ENCODE measurements at regions of chr2 and their contacts with region 1.

Region 1: GRCh38 chr2:237512774-237513466 is 25.9 kb downstream of the MLPH start:
- DNase-seq: peak; percentile 72 to 90
- ATAC-seq: peak; percentile 83 to 86
- H3K4me3 ChIP-seq: no peak overlapping the region
- H3K27ac ChIP-seq: peak overlapping the region; percentile 97 to 98
- H3K4me1 ChIP-seq: peaks cover 58% of the 10 kb centered on the region
- CTCF ChIP-seq: peak; percentile 96
- EP300 ChIP-seq: no peak
- POLR2A ChIP-seq: no peak
- RAD21 ChIP-seq: peak; percentile 82 to 83

Region 2: DNA sequence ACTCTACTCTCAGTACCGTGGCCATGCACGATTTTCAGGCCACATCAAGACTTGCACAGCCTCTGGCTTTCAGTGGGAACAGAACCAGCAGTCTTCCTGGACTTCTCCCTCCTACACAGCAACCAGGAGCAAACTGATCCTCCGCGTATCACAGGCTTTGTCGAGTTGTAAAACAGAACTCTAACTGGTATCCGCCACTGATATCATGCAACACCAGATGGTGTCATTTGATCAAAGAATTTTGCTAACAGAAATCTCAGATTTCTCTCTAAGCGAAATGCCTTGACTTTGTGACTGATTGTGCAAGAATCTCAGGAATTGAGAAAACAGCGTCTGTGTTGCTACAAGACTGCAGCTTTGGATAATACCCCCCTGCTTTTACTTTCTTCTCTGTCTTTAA is 341.5 kb before region 1 on chr2:
- CTCF ChIA-PET with region 1: interaction called, 17 read pairs
- POLR2A ChIA-PET with region 1: no interaction called
- DNase-seq: peak; percentile 36 to 76
- ATAC-seq: peak; percentile 84 to 90
- H3K4me3 ChIP-seq: no peak overlapping the region
- H3K27ac ChIP-seq: peak overlapping the region; percentile 57 to 83
- H3K4me1 ChIP-seq: peaks cover 12% of the 10 kb centered on the region
- CTCF ChIP-seq: peak; percentile 68
- EP300 ChIP-seq: no peak
- POLR2A ChIP-seq: no peak
- RAD21 ChIP-seq: peak; percentile 89 to 94

Region 3: GRCh38 chr2:237474931-237475703 is 37.8 kb before region 1 on chr2:
- CTCF ChIA-PET with region 1: interaction called, 117 read pairs
- POLR2A ChIA-PET with region 1: interaction called, 12 read pairs
- DNase-seq: peak; percentile 71 to 85
- ATAC-seq: peak; percentile 80 to 89
- H3K4me3 ChIP-seq: peak overlapping the region; percentile 57
- H3K27ac ChIP-seq: peak overlapping the region; percentile 95 to 100
- H3K4me1 ChIP-seq: peaks cover 36% of the 10 kb centered on the region
- CTCF ChIP-seq: peak; percentile 85
- EP300 ChIP-seq: peak in 1 of 2 experiments; percentile 32; a peak in 1 of 5 replicates
- POLR2A ChIP-seq: peak; percentile 35; the same call in 1 of the 2 replicates
- RAD21 ChIP-seq: peak; percentile 43 to 66

Region 4: GRCh38 chr2:237500681-237501424 is 12.1 kb before region 1 on chr2:
- CTCF ChIA-PET with region 1: interaction called, 62 read pairs
- POLR2A ChIA-PET with region 1: interaction called, 19 read pairs
- DNase-seq: peak; percentile 96 to 99
- ATAC-seq: peak; percentile 85 to 86
- H3K4me3 ChIP-seq: peak overlapping the region; percentile 21; the same call in 1 of the 3 replicates
- H3K27ac ChIP-seq: peak overlapping the region; percentile 97 to 98
- H3K4me1 ChIP-seq: peaks cover 94% of the 10 kb centered on the region
- CTCF ChIP-seq: no peak
- EP300 ChIP-seq: peak; percentile 99 to 100
- POLR2A ChIP-seq: no peak
- RAD21 ChIP-seq: peak; percentile 16 to 52; a peak in 3 of 5 replicates

Region 5: DNA sequence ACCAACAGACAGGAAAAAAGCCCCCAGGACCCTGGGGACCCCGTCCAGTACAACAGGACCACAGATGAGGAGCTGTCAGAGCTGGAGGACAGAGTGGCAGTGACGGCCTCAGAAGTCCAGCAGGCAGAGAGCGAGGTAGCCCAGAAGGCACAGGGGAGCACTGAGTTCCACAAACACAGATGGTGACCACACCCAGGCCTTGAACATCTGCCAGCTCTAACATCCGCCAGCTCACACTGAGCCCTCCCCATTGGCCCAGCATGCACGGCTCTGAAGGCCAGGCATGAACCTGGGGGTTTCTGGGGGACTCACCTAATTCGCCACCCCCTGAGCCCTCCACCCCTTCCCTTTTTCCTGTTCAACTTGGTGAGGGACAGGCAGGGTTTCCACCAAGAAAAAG is 27.9 kb after region 1 on chr2:
- CTCF ChIA-PET with region 1: interaction called, 26 read pairs
- POLR2A ChIA-PET with region 1: interaction called, 4 read pairs
- DNase-seq: peak in 1 of 2 experiments; percentile 42
- ATAC-seq: peak; percentile 10 to 49; a peak in 5 of 6 replicates
- H3K4me3 ChIP-seq: no peak overlapping the region
- H3K27ac ChIP-seq: peak overlapping the region; percentile 50 to 70; a peak in 5 of 6 replicates
- H3K4me1 ChIP-seq: peaks cover 47% of the 10 kb centered on the region
- CTCF ChIP-seq: no peak
- EP300 ChIP-seq: no peak
- POLR2A ChIP-seq: no peak
- RAD21 ChIP-seq: no peak

Region 6: GRCh38 chr2:237566401-237567235 is 53.7 kb after region 1 on chr2 and contains the start of gene PRLH:
- CTCF ChIA-PET with region 1: interaction called, 146 read pairs
- POLR2A ChIA-PET with region 1: interaction called, 6 read pairs
- DNase-seq: no peak
- ATAC-seq: peak in 1 of 2 experiments; percentile 6; a peak in 1 of 6 replicates
- H3K4me3 ChIP-seq: no peak within 1 kb of the TSS
- H3K27ac ChIP-seq: no peak within 1 kb of the TSS
- H3K4me1 ChIP-seq: peaks cover 1% of the 10 kb centered on the region; the same call in 1 of the 3 replicates
- CTCF ChIP-seq: no peak
- EP300 ChIP-seq: no peak
- POLR2A ChIP-seq: no peak
- RAD21 ChIP-seq: no peak
- polyA plus RNA-seq, gene PRLH: not detected in 2 replicates

Measured in A549 (cell line).